ENCODE measurements at regions of chr11 and their contacts with region 1.

Region 1: DNA sequence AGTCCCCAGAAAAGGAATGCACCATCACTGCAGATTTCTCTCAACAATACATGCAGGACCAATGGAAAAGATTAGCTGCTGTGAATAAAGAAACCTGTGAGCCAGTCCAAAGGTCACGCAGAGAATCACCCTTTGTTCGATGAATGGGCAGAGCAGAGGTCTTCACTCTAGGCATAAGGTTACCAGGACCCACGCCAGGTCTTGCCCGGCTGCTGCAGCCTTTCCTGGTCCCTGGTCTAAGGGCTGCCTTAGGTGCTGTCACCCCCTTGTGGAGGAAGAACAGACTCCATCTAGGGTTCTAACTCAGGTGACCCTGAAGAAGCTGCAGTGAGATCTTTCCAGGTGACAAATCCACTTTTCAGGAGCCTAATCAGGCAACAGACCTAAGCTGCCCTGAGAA is 29.0 kb upstream of the NAP1L4 start:
- DNase-seq: no peak

Region 2: DNA sequence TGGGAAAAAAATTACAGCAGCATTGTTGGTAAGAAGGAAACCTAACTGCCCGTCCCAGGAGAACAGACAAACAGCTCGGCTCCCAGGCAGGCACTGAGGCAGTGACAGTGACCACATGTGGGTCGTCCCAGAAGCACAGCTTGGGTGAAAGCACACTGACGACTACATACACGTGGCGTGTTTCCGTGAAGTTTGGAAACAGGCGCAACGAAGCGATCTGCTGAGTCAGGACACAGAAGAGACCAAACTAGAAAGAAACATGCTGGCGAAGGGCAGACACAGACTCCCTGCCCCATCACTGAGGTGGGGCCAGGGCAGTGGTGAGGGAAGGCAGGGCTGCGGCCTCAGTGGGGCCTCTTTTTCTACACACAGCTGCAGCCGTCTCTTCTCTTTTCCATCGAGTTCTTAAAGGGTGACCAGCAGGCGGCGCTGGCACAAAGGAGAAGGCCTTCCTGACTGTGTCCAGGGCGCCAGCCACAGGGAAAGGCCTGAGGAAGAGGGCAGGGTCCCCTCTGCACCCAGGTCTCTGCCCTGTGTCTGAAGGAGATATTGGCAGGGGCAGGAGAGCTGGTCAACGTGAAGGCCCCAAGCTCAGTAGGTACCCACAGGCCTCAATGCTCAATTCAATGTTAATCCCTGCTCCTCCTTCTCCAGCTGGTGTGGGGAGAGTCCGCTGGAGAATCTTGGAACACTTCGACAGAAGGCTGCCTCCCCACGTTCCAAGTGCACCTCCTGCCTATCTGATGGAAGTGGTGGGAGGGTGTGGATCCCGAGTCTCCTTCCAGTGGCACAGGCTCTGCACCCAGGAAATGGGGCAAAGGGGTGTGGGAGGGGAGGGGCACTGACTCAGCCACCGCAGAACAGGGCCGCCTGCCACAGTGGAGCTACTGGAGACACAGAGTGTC is 16.2 kb after region 1 on chr11:
- intact Hi-C with region 1: no loop called
- DNase-seq: peak; percentile 95

Region 3: GRCh38 chr11:3130311-3131071 is 109.4 kb after region 1 on chr11:
- intact Hi-C with region 1: no loop called
- DNase-seq: peak; percentile 66

Region 4: GRCh38 chr11:3203221-3204043 is 182.3 kb after region 1 on chr11:
- intact Hi-C with region 1: loop called in 1 of 2 experiments (anchors 10 kb)
- DNase-seq: peak; percentile 73